ENCODE measurements at regions of chr10 and their contacts with region 1.

Region 1: GRCh38 chr10:129096065-129096984 is 370.7 kb upstream of the MGMT start:
- DNase-seq: peak in 1 of 2 donors; percentile 79
- H3K4me3 ChIP-seq: no peak overlapping the region
- H3K27ac ChIP-seq: peak overlapping the region; percentile 55
- H3K4me1 ChIP-seq: peaks cover 0 to 14% of the 10 kb centered on the region in 2 donors
- H3K27me3 ChIP-seq: no peaks in the 10 kb centered on the region
- CTCF ChIP-seq: no peak

Region 2: DNA sequence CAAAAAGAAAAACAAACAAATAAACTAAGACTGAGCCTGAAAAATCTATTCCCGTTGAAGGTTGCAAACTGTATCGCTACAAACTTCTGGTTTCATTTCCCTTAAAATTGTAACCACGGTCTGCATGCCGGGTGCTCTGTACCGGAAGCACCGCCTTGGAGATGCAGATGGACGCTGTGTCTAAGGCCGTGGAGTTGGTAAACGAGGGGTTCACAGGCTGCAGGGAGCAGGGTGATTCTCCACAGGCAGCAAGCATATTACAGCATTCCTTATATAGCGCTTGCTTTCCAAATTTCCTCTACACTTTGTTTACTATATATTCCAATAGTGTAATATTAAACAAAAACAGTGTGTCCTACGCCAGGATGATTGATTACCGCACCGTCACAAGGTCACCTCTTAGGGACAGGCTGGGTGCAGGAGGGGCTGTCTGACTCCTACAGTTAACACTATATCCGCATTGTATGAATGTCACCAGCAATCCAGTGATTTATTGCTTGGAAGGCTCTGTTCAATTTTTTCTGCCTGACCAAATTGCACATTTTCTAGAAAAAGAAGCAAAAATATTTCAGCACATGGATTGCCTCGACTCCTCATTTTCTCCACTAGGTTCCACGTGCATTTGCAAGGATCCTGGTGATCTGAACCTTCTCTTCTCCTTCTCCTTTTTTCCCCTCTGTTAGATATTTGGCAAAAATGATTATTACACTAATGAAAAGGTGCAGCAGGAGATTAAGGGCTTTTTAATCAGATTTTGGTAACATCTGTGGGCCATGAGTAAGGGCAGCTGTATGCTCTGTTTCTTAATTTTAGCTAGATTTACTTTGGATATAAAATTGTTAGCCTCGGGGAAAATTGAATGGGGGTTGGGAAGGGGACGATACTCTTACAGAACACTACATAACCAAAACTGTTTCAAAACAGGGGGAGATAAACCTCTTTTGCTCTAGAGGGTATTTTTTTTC is 44.9 kb after region 1 on chr10:
- intact Hi-C with region 1: no loop called
- DNase-seq: no peak
- H3K4me3 ChIP-seq: no peak overlapping the region
- H3K27ac ChIP-seq: no peak overlapping the region
- H3K4me1 ChIP-seq: no peaks in the 10 kb centered on the region
- H3K27me3 ChIP-seq: no peaks in the 10 kb centered on the region
- CTCF ChIP-seq: no peak

Region 3: DNA sequence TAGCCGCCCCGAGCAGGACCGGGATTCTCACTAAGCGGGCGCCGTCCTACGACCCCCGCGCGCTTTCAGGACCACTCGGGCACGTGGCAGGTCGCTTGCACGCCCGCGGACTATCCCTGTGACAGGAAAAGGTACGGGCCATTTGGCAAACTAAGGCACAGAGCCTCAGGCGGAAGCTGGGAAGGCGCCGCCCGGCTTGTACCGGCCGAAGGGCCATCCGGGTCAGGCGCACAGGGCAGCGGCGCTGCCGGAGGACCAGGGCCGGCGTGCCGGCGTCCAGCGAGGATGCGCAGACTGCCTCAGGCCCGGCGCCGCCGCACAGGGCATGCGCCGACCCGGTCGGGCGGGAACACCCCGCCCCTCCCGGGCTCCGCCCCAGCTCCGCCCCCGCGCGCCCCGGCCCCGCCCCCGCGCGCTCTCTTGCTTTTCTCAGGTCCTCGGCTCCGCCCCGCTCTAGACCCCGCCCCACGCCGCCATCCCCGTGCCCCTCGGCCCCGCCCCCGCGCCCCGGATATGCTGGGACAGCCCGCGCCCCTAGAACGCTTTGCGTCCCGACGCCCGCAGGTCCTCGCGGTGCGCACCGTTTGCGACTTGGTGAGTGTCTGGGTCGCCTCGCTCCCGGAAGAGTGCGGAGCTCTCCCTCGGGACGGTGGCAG is 370.5 kb after region 1 on chr10 and contains the start of gene MGMT:
- intact Hi-C with region 1: loop called (anchors 5 kb)
- DNase-seq: peak; percentile 79 to 97
- H3K4me3 ChIP-seq: peak within 1 kb of the TSS; percentile 59 to 74
- H3K27ac ChIP-seq: peak within 1 kb of the TSS; percentile 78 to 88
- H3K4me1 ChIP-seq: peaks cover 5 to 9% of the 10 kb centered on the region in 2 donors
- H3K27me3 ChIP-seq: no peaks in the 10 kb centered on the region
- CTCF ChIP-seq: no peak
- total RNA-seq, gene MGMT: 7.0 TPM